ENCODE measurements at regions of chr1 and their contacts with region 1.

Region 1: DNA sequence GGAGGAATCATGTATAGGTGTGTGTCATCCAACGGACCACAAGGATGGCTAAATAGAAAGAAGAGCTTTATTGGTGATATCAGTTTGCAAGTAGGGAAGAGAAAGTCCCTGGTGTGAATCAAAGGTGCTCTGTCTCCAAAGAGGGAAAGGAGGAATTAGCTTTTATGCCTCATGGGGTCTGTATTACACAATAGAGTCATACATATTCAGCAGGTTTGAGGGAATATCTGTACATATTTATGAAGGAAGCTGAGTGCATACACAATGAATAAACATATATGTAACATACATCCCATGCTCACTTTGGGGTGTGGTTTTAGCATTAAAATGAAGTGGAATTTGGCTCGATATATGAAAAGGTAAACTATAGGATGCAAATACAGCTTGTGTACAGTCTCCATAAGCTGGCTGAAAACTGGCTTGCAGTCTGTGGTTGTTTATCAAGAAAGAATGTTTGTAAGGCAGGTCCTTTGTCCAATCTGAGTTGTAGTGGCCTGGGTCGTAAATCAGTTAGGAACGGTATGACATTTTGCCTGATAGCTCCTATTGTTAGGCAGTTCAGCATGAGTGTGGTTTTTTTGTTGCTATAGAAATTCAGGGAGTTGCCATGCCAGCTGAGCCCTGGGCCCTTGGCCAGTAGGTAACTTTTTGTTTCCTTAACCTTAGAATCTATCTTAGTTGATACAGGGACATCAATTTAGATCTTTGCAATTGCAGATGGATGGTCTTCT is 198.0 kb upstream of the ZP4 start:
- DNase-seq: no peak
- H3K4me3 ChIP-seq: no peak overlapping the region
- H3K27ac ChIP-seq: no peak overlapping the region
- H3K27me3 ChIP-seq: peaks cover 0 to 5% (median 0%) of the 10 kb centered on the region in 45 donors
- CTCF ChIP-seq: no peak

Region 2: GRCh38 chr1:238764779-238765178 is 676.1 kb after region 1 on chr1:
- intact Hi-C with region 1: loop called in 1 of 2 experiments (anchors 5 kb)
- DNase-seq: no peak
- H3K4me3 ChIP-seq: no peak overlapping the region
- H3K27ac ChIP-seq: no peak overlapping the region
- H3K27me3 ChIP-seq: no peaks in the 10 kb centered on the region
- CTCF ChIP-seq: no peak